BJ (cell line): ENCODE measurements at regions of chr1 and their contacts with region 1.

Region 1: DNA sequence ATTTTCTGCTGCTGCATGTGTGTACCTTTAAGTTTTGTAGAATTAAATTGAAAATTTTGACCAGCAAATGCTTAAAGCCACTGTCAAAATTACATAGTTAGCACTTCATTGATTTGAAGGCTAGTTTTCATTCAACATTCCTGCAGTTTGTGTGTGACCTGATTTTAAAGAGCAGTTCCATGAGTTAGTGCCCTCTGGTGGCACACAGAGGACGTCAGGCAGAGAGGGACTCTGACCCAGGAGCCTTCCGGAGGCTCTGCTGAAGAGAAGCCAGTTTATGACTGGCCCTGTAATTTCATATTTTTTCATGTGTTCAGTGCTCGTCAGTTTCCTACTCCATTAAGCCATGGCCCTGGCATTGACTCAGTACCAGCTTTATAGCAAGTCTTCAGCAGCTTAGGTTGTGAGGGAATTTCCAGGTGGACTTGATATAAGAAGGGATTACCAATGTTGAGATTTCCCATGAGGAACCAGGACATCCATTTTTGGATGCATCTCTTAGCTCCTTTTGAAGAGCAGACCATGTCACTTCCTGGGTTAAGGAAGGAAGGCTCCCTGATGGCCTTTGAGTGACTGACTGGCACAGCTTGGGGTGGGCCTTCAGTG is 104.7 kb downstream of the CAMTA1 start:
- DNase-seq: no peak
- H3K4me3 ChIP-seq: no peak overlapping the region
- H3K27me3 ChIP-seq: no peaks in the 10 kb centered on the region
- CTCF ChIP-seq: peak; percentile 86

Region 2: GRCh38 chr1:6794164-6794563 is 95.8 kb before region 1 on chr1:
- CTCF ChIA-PET with region 1: interaction called, 32 read pairs
- POLR2A ChIA-PET with region 1: no interaction called
- DNase-seq: no peak
- H3K4me3 ChIP-seq: no peak overlapping the region
- H3K27me3 ChIP-seq: no peaks in the 10 kb centered on the region
- CTCF ChIP-seq: peak; percentile 37

Region 3: GRCh38 chr1:6801966-6802365 is 88.0 kb before region 1 on chr1:
- CTCF ChIA-PET with region 1: interaction called, 32 read pairs
- POLR2A ChIA-PET with region 1: no interaction called
- DNase-seq: no peak
- H3K4me3 ChIP-seq: no peak overlapping the region
- H3K27me3 ChIP-seq: no peaks in the 10 kb centered on the region
- CTCF ChIP-seq: no peak

Region 4: DNA sequence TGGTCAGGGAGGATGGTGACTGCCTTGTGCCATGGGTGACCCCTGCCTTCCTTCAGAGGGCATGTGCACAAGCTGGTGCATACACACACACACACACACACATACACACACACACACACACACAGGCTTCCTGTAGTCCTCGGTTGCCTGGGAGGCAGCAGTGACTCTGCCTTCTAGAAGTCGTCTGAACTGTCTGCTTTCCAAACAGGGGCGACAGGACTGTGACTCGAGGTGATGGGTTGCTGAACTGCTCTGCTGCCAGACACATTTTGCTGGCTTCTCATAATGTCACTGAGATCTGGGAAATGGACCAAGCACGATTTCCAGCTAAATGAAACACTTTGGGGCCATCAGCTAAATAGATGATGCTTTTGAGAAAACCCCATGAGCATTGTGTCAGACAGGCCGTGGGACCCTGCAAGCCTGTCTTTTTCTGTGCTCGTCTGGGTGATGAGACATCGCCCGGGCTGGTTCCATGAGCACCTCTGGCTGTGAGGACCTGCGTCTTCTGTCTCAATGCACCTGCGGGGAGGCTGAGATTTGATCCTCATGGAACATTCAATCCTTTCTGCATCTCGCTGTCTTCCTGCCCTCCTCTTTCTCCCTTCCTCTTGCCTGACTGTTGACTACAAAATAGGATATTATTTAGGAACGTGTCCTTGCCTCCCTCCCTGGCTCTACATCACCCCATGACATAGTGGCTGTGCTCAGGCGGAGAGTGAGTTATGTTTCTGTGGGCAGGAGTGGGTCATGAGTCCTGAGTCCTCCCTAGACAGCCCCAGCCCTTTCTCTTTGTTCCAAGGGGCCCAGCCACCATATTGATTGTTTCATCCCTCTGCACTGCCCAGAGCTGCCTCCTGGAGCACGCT is 332.1 kb after region 1 on chr1:
- CTCF ChIA-PET with region 1: no interaction called
- POLR2A ChIA-PET with region 1: interaction called, 11 read pairs
- DNase-seq: no peak
- H3K4me3 ChIP-seq: no peak overlapping the region
- H3K27me3 ChIP-seq: no peaks in the 10 kb centered on the region
- CTCF ChIP-seq: no peak